SK-N-SH (cell line): ENCODE measurements at regions of chr6 and their contacts with region 1.

Region 1: DNA sequence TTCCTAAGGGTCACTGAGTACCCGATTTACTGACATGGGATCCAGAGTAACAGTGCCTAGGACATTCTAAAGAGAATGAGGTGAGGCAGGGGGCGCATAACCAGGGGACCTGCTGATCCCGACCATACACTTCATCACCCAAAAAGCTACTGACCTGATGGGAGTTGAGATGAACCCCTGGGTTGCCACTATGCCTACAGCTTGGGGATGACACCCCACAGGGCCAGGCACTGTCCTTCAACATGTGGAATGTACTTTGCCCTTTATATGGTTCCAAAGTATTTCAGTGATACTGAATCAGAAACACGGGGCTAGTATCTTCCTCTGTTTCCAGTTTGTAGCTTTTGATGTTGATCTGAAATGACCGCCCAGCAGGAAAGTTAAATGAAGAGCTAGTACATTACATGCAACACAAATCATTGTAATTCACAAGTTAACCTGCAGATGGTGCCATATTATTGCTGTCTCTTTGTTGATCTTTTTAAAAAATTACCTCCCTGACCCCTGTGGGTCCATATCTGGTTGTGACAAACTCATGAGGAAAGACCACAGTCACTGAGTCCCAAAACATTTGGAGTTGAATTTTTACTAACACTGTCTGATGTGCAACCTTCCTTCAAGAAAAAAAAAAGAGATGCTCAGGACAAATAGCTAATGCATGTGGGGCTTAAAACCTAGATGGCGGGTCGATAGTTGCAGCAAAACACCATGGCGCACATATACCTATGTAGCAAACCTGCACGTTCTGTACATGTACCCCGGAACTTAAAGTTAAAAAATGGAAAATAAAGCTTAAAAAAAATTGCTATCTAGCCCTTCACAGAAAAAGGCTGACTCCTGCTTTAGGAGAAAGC is 42.7 kb upstream of the GCNT2 start:
- DNase-seq: peak; percentile 62
- H3K4me3 ChIP-seq: no peak overlapping the region
- H3K27ac ChIP-seq: no peak overlapping the region
- H3K4me1 ChIP-seq: 0 out of 4 replicates have a peak, but pooled peaks cover 0 to 3% of the 10 kb centered on the region in 2 experiments
- H3K27me3 ChIP-seq: no peaks in the 10 kb centered on the region
- CTCF ChIP-seq: peak; percentile 77
- EP300 ChIP-seq: no peak
- RAD21 ChIP-seq: peak; percentile 75

Region 2: DNA sequence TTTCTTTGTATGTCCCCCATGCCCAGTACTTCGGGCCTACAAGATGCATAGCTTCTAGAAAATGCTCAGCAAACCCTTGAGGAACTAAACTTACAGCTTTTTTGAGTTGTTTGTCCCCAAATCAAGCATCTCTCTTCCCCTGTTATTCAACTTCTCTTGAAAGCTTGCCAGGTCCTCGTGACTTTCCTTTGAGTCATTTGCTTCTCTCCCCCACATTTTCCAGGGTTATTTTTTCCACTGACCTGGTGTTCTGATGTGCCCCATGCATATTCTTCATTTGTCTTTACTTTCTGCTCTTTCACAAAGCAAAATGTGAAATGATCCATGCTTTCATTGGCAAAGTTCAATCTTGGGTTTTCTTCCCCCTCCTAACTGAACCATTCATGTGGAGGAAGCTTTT is 268.4 kb before region 1 on chr6:
- CTCF ChIA-PET with region 1: no interaction called
- POLR2A ChIA-PET with region 1: no interaction called
- DNase-seq: no peak
- H3K4me3 ChIP-seq: no peak overlapping the region
- H3K27ac ChIP-seq: no peak overlapping the region
- H3K4me1 ChIP-seq: no peaks in the 10 kb centered on the region
- H3K27me3 ChIP-seq: no peaks in the 10 kb centered on the region
- CTCF ChIP-seq: no peak
- EP300 ChIP-seq: no peak
- RAD21 ChIP-seq: no peak

Region 3: DNA sequence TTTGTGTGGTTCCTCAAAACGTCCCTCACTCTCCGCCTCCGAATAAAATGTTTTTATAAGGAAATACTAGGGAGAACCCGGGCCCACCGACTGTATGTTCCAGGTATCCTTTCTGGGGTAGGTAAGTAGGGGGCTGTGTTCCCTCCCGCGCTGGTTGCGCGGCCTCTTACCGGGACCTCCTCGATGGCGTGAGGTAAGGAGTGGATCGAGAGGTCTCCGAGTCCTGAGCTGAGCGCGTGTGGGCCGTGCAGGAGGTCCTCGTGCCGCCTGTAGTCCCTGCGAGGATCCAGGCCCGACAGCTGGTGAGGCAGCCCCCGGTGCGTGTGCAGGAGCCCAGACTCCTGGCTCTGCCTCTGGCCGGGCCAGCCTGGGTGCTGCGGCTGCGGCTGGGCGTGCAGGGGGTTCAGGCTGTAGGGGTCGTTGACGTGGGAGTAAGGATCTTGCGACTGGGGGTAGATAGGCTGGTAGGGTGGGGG is 68.6 kb before region 1 on chr6:
- CTCF ChIA-PET with region 1: no interaction called
- POLR2A ChIA-PET with region 1: no interaction called
- DNase-seq: no peak
- H3K4me3 ChIP-seq: no peak overlapping the region
- H3K27ac ChIP-seq: no peak overlapping the region
- H3K4me1 ChIP-seq: peaks cover 0 to 2% of the 10 kb centered on the region in 2 experiments; a peak in 1 of 4 replicates
- H3K27me3 ChIP-seq: peaks cover 75% of the 10 kb centered on the region
- CTCF ChIP-seq: no peak
- EP300 ChIP-seq: no peak
- RAD21 ChIP-seq: no peak

Region 4: GRCh38 chr6:10465629-10466504 is 12.5 kb before region 1 on chr6:
- CTCF ChIA-PET with region 1: interaction called, 10 read pairs
- POLR2A ChIA-PET with region 1: interaction called, 4 read pairs
- DNase-seq: peak; percentile 54
- H3K4me3 ChIP-seq: no peak overlapping the region; a peak in 1 of 4 replicates
- H3K27ac ChIP-seq: no peak overlapping the region
- H3K4me1 ChIP-seq: no peaks in the 10 kb centered on the region
- H3K27me3 ChIP-seq: peaks cover 4% of the 10 kb centered on the region; the same call in 1 of the 2 replicates
- CTCF ChIP-seq: peak; percentile 62
- EP300 ChIP-seq: no peak
- RAD21 ChIP-seq: peak; percentile 30; the same call in 1 of the 2 replicates

Region 5: DNA sequence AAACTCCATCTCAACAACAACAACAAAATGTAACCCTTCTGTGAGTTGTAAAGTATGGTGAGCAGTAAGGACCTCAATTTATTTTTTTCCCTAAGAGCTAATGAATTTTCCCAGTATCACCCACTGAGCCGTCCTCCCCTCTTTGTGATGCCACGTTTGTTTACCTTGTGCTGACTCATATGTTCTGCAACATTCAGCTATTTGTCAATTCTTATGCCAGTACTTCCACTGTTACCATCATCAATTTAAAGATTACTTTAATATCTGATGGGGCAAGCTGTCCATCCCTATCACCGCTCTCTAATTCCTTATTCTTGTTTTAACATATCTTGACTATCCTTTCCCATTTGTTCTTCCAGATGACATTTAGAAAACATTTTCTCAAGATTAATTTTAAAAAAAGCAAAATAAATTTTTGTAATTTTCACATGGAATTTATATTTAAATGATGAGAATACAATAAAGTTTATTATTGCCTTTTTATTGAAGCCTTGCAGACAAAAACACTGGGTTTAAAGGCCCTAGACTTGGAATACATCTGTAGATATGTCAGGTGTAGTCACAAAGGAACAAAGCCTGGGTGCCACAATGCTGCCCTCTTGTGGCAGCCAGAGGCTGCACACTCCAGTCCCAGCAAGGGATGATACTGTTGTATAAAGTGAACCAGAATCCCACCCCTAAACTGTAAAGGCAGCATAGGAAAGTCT is 322.6 kb after region 1 on chr6:
- CTCF ChIA-PET with region 1: interaction called, 28 read pairs
- POLR2A ChIA-PET with region 1: no interaction called
- DNase-seq: peak; percentile 78
- H3K4me3 ChIP-seq: no peak overlapping the region; a peak in 1 of 4 replicates
- H3K27ac ChIP-seq: no peak overlapping the region
- H3K4me1 ChIP-seq: no peaks in the 10 kb centered on the region
- H3K27me3 ChIP-seq: no peaks in the 10 kb centered on the region
- CTCF ChIP-seq: peak; percentile 100
- EP300 ChIP-seq: no peak
- RAD21 ChIP-seq: peak; percentile 90